ENCODE measurements at regions of chr1 and their contacts with region 1.

Region 1: DNA sequence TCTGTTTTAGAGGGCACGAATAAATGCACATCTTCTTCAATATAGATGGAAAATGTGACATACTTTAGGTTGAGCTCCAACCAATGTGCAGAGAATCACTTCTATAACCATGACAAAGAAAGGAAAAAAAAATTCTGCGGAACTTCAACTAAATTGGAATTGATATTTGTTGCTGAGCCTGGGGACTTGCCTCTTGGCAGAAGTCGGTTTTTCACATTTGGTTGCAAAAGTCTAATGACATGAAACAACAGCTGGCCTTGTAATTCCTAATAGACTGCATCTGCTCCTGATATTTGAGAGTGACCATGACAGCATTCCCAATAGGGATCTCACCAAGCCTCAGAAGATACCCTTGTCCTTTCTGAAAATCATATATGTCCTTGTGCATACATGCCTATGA is 112.8 kb downstream of the PRRX1 start:
- DNase-seq: peak in 1 of 2 donors; percentile 15
- ATAC-seq: peak in 6 of 8 donors; percentile 28 to 89 (median 54)
- H3K4me3 ChIP-seq: no peak overlapping the region
- H3K27ac ChIP-seq: peak overlapping the region in 1 of 10 donors; percentile 40
- H3K4me1 ChIP-seq: no peaks in the 10 kb centered on the region
- H3K27me3 ChIP-seq: no peaks in the 10 kb centered on the region
- CTCF ChIP-seq: no peak

Region 2: DNA sequence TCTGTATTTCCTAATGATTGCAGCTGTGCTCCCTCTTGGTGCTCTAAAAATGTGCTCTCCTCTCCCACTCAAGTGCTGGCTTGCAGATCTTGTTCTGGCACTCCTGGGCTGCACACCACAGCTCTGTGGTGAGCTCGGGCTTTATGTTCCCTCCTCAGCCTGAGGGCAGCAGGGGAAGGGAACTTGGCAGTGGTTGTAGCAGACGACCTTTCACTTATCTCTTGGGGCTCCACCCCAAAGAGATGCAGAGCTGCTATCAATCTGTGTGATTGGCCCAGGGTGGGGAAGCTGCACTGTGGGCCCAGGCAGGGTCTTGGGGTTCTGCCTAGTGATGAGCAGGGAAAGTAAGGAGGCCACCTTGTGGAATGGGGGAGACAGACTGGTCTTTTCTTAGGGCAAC is 388.3 kb before region 1 on chr1:
- intact Hi-C with region 1: no loop called
- DNase-seq: no peak
- ATAC-seq: peak in 3 of 8 donors; percentile 18 to 90 (median 24)
- H3K4me3 ChIP-seq: no peak overlapping the region
- H3K27ac ChIP-seq: no peak overlapping the region
- H3K4me1 ChIP-seq: peaks cover 0 to 4% (median 0%) of the 10 kb centered on the region in 9 donors
- H3K27me3 ChIP-seq: no peaks in the 10 kb centered on the region
- CTCF ChIP-seq: no peak

Region 3: GRCh38 chr1:170864238-170864637 is 87.5 kb after region 1 on chr1:
- intact Hi-C with region 1: loop called in 1 of 10 experiments (anchors 10 kb)
- DNase-seq: peak in 1 of 2 donors; percentile 60
- ATAC-seq: peak in 7 of 8 donors; percentile 63 to 89 (median 81)
- H3K4me3 ChIP-seq: no peak overlapping the region
- H3K27ac ChIP-seq: peak overlapping the region in 4 of 10 donors; percentile 11 to 70 (median 41)
- H3K4me1 ChIP-seq: peaks cover 0 to 24% (median 5%) of the 10 kb centered on the region in 9 donors
- H3K27me3 ChIP-seq: no peaks in the 10 kb centered on the region
- CTCF ChIP-seq: no peak